ENCODE measurements at regions of chr11 and their contacts with region 1.

Region 1: GRCh38 chr11:77047007-77047927 is 13.1 kb downstream of the B3GNT6 start:
- DNase-seq: peak; percentile 88
- H3K4me3 Mint-ChIP-seq: peak overlapping the region; percentile 52
- H3K27ac Mint-ChIP-seq: peak overlapping the region; percentile 64
- H3K4me1 Mint-ChIP-seq: peaks cover 8% of the 10 kb centered on the region
- H3K27me3 Mint-ChIP-seq: peaks cover 3% of the 10 kb centered on the region

Region 2: DNA sequence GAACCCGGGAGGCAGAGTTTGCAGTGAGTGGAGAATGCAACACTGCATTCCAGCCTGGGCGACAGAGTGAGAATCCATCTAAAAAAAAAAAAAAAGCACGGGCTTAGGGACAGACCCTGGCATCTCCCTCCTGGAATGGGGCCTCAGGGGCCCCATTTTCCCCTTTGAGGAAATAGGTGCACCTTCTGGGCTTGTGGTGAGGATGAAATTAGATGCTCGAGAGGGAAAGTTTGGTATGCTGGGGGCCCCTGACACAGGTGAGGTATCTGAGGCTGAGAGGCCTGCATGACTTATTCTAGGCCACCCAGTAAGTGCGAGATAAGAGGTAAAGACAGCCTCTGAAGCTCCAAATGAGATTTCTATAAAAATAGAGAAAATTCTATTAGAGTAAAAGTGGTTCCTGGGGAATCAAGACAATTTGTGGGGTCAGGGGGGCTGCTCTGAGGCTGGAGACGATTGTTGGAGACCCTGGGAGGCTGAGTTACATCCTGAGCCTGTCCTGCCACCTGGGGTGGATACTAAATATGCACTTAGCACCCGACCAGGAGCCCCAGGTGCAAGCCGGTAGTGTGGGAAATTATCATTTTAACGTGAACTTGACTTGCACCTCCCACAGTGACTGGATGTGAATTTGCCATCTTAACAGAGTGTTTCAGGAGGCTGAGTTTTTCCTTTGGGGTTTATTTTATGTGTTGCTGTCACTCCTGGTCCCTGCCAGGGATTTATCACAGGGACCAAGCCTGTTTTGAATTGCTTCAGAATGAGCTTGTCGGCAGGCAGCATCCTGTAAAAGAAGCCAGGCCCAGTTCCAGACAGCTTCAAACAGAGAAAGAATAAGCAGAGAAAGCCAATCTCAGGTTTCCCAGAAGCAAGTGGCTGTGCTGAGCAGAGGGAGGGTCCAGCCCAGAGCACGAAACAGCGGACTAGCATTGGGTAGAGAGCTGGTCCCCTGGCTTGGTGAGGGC is 312.5 kb before region 1 on chr11:
- CTCF ChIA-PET with region 1: interaction called, 7 read pairs
- intact Hi-C with region 1: loop called (anchors 2 kb)
- DNase-seq: no peak
- H3K4me3 Mint-ChIP-seq: no peak overlapping the region
- H3K27ac Mint-ChIP-seq: no peak overlapping the region
- H3K4me1 Mint-ChIP-seq: no peaks in the 10 kb centered on the region
- H3K27me3 Mint-ChIP-seq: no peaks in the 10 kb centered on the region

Region 3: DNA sequence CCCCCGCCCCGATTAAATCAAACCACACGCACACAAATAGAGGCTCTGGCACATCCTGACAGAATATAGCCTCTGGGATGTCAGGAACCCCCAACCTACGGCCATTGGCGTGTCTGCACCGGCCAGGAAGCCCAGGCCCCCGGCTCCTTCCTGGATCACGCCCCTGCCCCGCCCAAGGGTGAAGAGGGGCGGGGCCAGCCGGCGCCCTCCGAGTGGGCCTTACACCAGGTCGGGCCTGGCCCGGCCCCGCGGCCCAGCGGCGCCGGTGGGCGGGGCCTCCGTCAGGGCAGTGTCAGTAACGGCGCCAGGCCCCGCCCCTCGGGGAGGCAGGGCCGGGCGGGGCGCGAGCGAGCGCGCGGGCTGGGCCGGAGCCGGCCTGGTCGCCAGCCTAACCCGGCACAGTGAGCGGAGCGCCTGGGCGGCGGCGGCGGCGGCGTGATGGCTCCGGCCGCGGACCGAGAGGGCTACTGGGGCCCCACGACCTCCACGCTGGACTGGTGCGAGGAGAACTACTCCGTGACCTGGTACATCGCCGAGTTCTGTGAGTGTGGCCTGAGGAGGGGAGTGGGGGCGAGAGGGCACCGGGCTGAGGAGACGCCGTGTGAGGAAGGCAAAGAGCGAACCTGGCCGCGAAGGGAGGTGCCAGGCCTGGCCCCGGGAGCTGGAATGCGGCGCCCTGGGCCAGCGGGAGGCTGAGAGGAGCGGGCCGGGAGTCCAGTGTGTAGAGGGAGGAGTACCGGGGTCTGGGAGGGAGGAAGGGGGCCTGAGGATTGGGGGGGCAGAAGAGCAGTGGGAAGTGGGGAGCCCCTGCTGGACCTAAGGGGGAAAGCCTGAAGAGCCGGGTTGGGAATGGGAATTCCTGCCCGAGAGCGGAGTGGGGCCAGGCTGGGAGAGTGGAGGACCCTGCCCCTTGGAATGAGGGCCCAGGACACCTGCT is 186.5 kb before region 1 on chr11 and contains the start of gene ACER3:
- CTCF ChIA-PET with region 1: no interaction called
- intact Hi-C with region 1: loop called (anchors 2 kb)
- DNase-seq: peak; percentile 85
- H3K4me3 Mint-ChIP-seq: peak within 1 kb of the TSS; percentile 87
- H3K27ac Mint-ChIP-seq: no peak within 1 kb of the TSS
- H3K4me1 Mint-ChIP-seq: peaks cover 14% of the 10 kb centered on the region
- H3K27me3 Mint-ChIP-seq: no peaks in the 10 kb centered on the region
- total RNA-seq, gene ACER3: 7.6 to 10.0 TPM

Region 4: DNA sequence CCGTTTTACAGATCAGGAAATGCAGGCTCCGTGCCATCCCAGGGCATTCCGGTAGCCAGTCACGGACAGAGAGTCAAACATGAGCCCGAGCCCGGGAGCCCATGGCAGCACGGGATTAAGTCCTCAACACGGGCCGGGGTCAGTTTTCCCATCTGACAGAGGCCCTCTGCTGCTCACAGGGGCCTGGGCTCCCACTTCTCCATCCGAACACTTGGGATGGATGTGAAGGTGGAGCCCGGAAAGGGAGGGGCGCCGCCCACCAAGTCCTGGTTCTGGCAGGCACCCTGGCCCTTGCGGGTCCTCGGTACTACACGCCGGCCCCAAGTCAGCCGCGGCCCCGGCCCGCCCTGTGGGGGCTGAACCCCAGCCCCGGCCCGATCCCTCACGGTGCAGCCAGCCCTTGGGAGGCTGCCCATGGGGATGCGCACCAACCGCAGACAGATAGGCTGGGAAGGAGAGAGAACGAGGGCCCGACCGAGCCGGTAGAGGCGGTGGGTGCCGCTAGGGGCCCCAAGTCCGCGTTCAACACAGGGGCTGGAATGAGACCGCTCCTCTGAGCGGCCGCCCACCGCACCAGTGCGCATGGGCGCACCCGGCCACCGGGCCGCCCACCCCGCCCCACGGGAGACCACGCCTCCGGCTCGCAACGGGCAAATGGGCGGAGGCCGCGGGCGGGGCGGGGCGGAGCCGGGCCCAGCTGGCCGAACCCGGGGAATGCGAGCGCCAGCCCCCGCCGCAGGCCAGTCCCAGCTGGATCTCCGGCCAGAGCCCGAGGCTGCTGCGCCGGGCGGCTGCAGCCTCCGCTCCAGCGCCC is 19.2 kb after region 1 on chr11 and contains the start of gene CAPN5:
- CTCF ChIA-PET with region 1: interaction called, 7 read pairs
- intact Hi-C with region 1: loop called (anchors 1 kb)
- DNase-seq: peak; percentile 82
- H3K4me3 Mint-ChIP-seq: peak within 1 kb of the TSS; percentile 77
- H3K27ac Mint-ChIP-seq: no peak within 1 kb of the TSS
- H3K4me1 Mint-ChIP-seq: peaks cover 10% of the 10 kb centered on the region
- H3K27me3 Mint-ChIP-seq: no peaks in the 10 kb centered on the region
- total RNA-seq, gene CAPN5: 0.79 to 1.5 TPM

Region 5: DNA sequence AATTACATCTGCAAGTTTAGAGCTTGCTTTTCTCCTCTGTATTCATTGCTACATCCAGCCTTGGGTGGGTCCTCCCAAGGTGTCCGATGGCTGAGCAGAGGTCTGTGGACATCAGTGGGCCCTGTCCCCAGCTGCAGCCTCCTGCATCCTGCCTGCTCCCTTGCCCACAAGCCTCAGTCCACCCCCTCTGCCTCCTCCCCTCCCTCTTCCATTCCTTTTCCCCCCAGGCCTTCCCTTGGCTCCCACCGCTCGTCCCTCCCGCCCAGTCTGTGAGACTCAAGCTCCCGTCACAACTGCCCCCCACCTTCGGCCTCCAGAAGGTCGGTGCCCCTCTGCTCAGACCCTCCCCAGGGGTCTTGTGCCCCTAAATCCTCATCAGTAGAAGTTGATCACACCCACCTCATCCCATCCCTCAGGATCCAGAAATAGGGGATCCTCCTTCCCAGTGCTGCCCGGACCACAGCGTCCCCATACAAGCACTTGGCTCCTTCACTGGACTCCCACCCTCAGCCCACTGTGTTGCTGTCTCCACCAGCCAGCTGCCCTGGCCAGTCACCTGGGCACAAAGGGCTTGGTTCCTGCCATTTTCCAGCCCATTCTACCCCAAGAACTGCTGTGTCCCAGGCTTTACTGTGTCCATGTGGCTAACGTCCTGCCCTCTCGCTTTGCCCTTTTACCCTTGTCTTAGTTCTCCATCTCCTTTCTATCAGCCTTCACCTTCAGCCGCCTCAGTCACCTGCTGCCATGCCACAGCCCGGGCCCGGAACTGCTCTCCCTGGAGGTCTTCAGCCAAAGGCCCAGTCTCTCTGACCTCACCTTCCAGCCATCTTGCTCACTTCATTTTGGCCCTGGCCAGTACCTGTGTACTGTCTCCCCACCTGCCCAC is 53.1 kb after region 1 on chr11:
- CTCF ChIA-PET with region 1: no interaction called
- intact Hi-C with region 1: no loop called
- DNase-seq: no peak
- H3K4me3 Mint-ChIP-seq: no peak overlapping the region
- H3K27ac Mint-ChIP-seq: no peak overlapping the region
- H3K4me1 Mint-ChIP-seq: no peaks in the 10 kb centered on the region
- H3K27me3 Mint-ChIP-seq: no peaks in the 10 kb centered on the region

Region 6: GRCh38 chr11:77113382-77114088 is 66.3 kb after region 1 on chr11:
- CTCF ChIA-PET with region 1: interaction called, 8 read pairs
- intact Hi-C with region 1: loop called (anchors 1 kb)
- DNase-seq: peak; percentile 56
- H3K4me3 Mint-ChIP-seq: no peak overlapping the region
- H3K27ac Mint-ChIP-seq: peak overlapping the region; percentile 18
- H3K4me1 Mint-ChIP-seq: no peaks in the 10 kb centered on the region
- H3K27me3 Mint-ChIP-seq: no peaks in the 10 kb centered on the region

Region 7: GRCh38 chr11:77187776-77188632 is 140.7 kb after region 1 on chr11:
- CTCF ChIA-PET with region 1: interaction called, 6 read pairs
- intact Hi-C with region 1: loop called (anchors 1 kb)
- DNase-seq: peak; percentile 85
- H3K4me3 Mint-ChIP-seq: no peak overlapping the region
- H3K27ac Mint-ChIP-seq: no peak overlapping the region
- H3K4me1 Mint-ChIP-seq: no peaks in the 10 kb centered on the region
- H3K27me3 Mint-ChIP-seq: no peaks in the 10 kb centered on the region

Region 8: GRCh38 chr11:77244243-77245027 is 197.2 kb after region 1 on chr11:
- CTCF ChIA-PET with region 1: no interaction called
- intact Hi-C with region 1: no loop called
- DNase-seq: peak; percentile 27
- H3K4me3 Mint-ChIP-seq: no peak overlapping the region
- H3K27ac Mint-ChIP-seq: peak overlapping the region; percentile 82
- H3K4me1 Mint-ChIP-seq: peaks cover 17% of the 10 kb centered on the region
- H3K27me3 Mint-ChIP-seq: no peaks in the 10 kb centered on the region

Region 9: DNA sequence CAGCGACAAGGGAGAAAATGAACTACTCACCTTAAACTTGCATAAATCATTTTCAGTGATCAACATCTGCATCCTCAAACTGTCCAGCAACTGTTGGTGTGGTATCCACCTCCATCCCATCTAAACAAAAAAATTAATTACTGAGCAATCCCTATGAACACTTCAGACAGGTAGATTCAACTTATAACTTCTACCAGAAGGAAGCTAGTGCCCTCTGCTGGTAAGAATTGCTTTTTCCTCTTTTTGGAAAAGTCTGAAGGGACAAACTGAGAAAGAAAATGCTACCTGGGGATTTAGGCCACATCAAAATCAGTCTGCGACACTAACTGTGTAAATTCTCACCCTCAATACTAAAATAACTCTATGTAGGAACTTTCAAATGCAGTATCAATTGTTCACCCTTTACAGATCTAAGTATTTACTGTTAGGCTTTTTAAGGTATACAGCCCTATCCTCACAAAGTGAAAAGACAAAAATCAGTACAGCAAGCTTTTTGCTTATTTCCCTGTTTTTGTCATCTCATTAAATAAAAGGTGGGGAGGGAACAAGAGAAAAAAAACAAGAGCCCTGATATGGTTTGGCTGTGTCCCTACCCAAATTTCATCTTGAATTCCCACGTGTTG is 572.4 kb after region 1 on chr11:
- CTCF ChIA-PET with region 1: no interaction called
- intact Hi-C with region 1: loop called (anchors 5 kb)
- DNase-seq: no peak
- H3K4me3 Mint-ChIP-seq: no peak overlapping the region
- H3K27ac Mint-ChIP-seq: no peak overlapping the region
- H3K4me1 Mint-ChIP-seq: no peaks in the 10 kb centered on the region
- H3K27me3 Mint-ChIP-seq: no peaks in the 10 kb centered on the region